H1 (cell line): ENCODE measurements at regions of chr9 and their contacts with region 1.

Region 1: DNA sequence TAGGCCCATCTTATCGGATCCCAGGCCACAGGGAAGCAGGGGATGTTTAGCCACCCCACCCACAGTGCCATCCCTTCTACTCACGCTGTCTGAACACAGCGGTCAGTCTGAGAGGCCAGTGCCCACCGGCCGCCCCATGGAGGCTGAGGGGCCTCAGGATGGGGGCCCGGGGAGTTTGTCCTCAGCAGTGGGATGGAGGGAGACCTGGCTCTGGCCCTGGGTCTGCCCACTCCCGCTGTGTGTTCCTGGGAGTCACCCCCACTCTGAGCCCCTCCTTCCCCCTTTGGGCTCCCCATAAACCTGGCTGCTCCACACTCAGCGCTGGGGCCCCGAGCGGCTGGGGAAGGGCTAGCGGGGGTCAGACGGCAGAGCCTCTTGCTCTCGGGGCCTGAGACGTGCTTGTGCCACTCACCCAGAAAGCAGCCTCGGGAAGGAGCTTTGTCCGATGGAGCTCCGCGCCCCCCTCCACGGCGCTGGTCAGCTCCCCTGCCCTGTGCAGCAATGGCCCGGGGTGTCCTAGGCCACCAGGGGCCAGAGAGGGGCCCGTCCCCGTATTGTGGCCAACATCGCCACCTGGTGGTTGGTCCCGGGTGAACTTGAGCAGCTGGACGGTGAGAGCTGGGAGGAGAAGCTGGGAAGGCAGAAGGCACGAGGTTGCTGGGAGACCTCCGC is 10.9 kb upstream of the LAMC3 start:
- DNase-seq: peak; percentile 67 to 99
- H3K4me3 ChIP-seq: no peak overlapping the region
- H3K27ac ChIP-seq: no peak overlapping the region
- H3K4me1 ChIP-seq: peaks cover 0 to 6% (median 1%) of the 10 kb centered on the region in 4 experiments; a peak in 3 of 7 replicates
- H3K27me3 ChIP-seq: peaks cover 0 to 9% (median 4%) of the 10 kb centered on the region in 4 experiments; a peak in 3 of 7 replicates
- CTCF ChIP-seq: peak in 2 of 3 experiments; percentile 96 to 99; a peak in 3 of 4 replicates
- EP300 ChIP-seq: no peak
- POLR2A ChIP-seq: no peak
- RAD21 ChIP-seq: peak; percentile 95 to 97

Region 2: DNA sequence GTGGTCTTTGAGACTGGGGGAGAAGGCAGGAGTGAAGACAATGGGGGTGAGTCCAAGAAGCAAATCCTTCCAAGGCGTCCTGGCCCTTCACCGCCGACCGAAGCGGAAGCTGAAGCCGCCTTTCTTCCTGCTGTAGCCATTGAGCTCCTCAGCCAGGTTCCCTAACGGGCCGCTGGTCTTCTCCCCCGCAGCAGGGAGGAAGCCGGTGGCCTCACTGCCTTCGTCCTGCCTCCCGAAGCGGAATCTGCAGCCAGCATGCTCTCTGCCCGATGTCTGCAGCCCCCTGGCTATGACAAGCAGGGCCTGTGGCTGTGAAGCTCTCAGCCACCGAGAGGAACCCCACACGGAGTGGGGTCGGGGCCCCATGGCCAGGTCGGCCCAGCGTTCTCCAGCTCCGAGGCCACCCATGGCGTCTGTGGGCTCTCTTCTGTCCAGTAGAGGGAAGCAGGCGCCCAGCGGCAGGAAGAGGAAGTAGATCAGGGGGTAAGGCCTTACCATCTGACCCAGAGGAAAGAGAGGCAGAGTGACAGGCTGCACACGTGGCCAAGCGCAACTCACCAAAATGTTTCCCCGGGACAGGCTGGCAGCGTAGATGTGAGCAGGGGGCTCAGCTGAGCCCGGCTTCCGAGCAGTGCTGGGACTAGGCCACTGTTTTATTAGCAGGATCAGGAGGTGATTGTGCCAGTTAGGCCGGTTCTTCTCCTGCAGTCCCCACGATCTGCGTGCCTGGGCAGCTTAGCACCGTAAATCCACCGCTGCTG is 104.5 kb before region 1 on chr9:
- CTCF ChIA-PET with region 1: interaction called, 10 read pairs
- POLR2A ChIA-PET with region 1: no interaction called
- DNase-seq: no peak
- H3K4me3 ChIP-seq: no peak overlapping the region
- H3K27ac ChIP-seq: no peak overlapping the region
- H3K4me1 ChIP-seq: peaks cover 0 to 3% (median 0%) of the 10 kb centered on the region in 4 experiments; a peak in 3 of 7 replicates
- H3K27me3 ChIP-seq: no peaks in the 10 kb centered on the region
- CTCF ChIP-seq: peak in 2 of 3 experiments; percentile 48 to 53; a peak in 3 of 4 replicates
- EP300 ChIP-seq: no peak
- POLR2A ChIP-seq: no peak; a peak in 1 of 3 replicates
- RAD21 ChIP-seq: peak; percentile 55 to 70

Region 3: GRCh38 chr9:130973169-130973936 is 24.7 kb before region 1 on chr9:
- CTCF ChIA-PET with region 1: interaction called, 17 read pairs
- POLR2A ChIA-PET with region 1: interaction called, 3 read pairs
- DNase-seq: no peak
- H3K4me3 ChIP-seq: no peak overlapping the region
- H3K27ac ChIP-seq: no peak overlapping the region
- H3K4me1 ChIP-seq: peaks cover 0 to 3% (median 0%) of the 10 kb centered on the region in 4 experiments; a peak in 1 of 7 replicates
- H3K27me3 ChIP-seq: no peaks in the 10 kb centered on the region; a peak in 1 of 7 replicates
- CTCF ChIP-seq: peak in 2 of 3 experiments; percentile 9 to 12; a peak in 2 of 4 replicates
- EP300 ChIP-seq: no peak
- POLR2A ChIP-seq: no peak
- RAD21 ChIP-seq: no peak

Region 4: GRCh38 chr9:131008909-131009618 is 11.0 kb after region 1 on chr9 and contains the start of gene LAMC3:
- CTCF ChIA-PET with region 1: interaction called, 25 read pairs
- POLR2A ChIA-PET with region 1: no interaction called
- DNase-seq: peak in 1 of 2 experiments; percentile 80
- H3K4me3 ChIP-seq: peak within 1 kb of the TSS; percentile 31 to 57 (median 40)
- H3K27ac ChIP-seq: no peak within 1 kb of the TSS
- H3K4me1 ChIP-seq: peaks cover 2 to 22% (median 8%) of the 10 kb centered on the region in 4 experiments
- H3K27me3 ChIP-seq: peaks cover 0 to 10% (median 7%) of the 10 kb centered on the region in 4 experiments; a peak in 5 of 7 replicates
- CTCF ChIP-seq: peak; percentile 49 to 72 (median 69)
- EP300 ChIP-seq: no peak
- POLR2A ChIP-seq: no peak; a peak in 1 of 3 replicates
- RAD21 ChIP-seq: peak; percentile 56 to 68
- total RNA-seq, gene LAMC3: 12.3 and 13.2 TPM in 2 replicates

Region 5: DNA sequence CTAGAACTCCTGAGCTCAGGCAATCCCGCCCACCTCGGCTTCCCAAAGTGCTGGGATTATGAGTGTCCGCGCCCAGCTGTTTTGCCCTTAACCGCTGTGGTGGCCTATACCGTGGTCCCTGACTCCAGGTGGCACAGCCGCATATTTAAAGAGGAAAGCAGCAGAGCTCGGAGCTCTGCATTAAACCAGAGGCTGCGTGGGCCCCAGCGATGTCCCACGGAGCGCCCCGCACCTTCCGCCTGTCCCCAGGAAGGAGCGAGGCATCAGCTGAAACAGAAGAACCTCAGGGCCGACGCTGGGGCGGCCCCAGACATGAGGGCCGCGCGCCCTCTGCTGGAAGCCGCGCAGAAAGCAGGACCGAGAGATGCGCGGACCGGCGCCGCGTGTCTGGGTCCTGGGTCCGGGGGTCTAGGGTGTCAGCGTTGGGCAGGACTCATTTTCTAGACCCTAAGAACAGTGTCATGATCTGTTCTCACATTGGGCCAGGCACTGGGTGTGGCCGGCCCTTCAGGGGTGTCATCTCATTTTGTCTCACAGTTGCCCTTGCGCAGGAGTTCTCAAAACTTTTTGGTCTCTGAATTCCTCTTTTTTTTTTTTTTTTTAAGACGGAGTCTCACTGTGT is 48.6 kb after region 1 on chr9:
- CTCF ChIA-PET with region 1: interaction called, 36 read pairs
- POLR2A ChIA-PET with region 1: no interaction called
- DNase-seq: peak; percentile 46 to 93
- H3K4me3 ChIP-seq: no peak overlapping the region
- H3K27ac ChIP-seq: no peak overlapping the region
- H3K4me1 ChIP-seq: no peaks in the 10 kb centered on the region
- H3K27me3 ChIP-seq: no peaks in the 10 kb centered on the region
- CTCF ChIP-seq: peak; percentile 81 to 94 (median 86)
- EP300 ChIP-seq: no peak
- POLR2A ChIP-seq: no peak
- RAD21 ChIP-seq: peak; percentile 90 to 95

Region 6: GRCh38 chr9:131227112-131227958 is 229.3 kb after region 1 on chr9:
- CTCF ChIA-PET with region 1: no interaction called
- POLR2A ChIA-PET with region 1: no interaction called
- DNase-seq: no peak
- H3K4me3 ChIP-seq: no peak overlapping the region
- H3K27ac ChIP-seq: no peak overlapping the region
- H3K4me1 ChIP-seq: peaks cover 8 to 16% (median 12%) of the 10 kb centered on the region in 4 experiments; a peak in 6 of 7 replicates
- H3K27me3 ChIP-seq: no peaks in the 10 kb centered on the region
- CTCF ChIP-seq: no peak
- EP300 ChIP-seq: no peak
- POLR2A ChIP-seq: no peak
- RAD21 ChIP-seq: no peak